Heart left ventricle (tissue), 16 donors: ENCODE measurements at regions of chr9 and their contacts with region 1.

Region 1: DNA sequence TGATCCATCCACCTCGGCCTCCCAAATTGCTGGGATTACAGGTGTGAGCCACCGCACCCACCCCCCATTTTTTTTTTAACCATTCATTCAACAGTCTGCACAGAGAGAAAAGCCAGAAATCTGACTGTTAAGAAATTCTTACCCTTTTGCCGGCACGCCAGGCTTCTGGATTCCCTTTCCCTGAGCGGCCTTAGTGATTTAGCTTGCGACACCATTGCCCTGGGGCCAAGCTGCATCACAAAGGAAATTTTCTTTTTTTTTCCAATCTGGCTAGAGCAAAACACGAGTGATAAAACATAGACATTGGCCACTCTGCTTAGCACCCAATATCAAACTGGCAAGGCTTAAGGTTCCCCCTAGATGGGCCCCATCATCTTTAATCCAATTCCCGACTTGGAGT is 21.2 kb upstream of the ATOSB start:
- DNase-seq: no peak
- ATAC-seq: no peak
- H3K4me3 ChIP-seq: no peak overlapping the region
- H3K27ac ChIP-seq: no peak overlapping the region
- H3K4me1 ChIP-seq: peaks cover 0 to 17% (median 6%) of the 10 kb centered on the region in 12 donors
- H3K27me3 ChIP-seq: no peaks in the 10 kb centered on the region
- CTCF ChIP-seq: no peak
- POLR2A ChIP-seq: no peak

Region 2: DNA sequence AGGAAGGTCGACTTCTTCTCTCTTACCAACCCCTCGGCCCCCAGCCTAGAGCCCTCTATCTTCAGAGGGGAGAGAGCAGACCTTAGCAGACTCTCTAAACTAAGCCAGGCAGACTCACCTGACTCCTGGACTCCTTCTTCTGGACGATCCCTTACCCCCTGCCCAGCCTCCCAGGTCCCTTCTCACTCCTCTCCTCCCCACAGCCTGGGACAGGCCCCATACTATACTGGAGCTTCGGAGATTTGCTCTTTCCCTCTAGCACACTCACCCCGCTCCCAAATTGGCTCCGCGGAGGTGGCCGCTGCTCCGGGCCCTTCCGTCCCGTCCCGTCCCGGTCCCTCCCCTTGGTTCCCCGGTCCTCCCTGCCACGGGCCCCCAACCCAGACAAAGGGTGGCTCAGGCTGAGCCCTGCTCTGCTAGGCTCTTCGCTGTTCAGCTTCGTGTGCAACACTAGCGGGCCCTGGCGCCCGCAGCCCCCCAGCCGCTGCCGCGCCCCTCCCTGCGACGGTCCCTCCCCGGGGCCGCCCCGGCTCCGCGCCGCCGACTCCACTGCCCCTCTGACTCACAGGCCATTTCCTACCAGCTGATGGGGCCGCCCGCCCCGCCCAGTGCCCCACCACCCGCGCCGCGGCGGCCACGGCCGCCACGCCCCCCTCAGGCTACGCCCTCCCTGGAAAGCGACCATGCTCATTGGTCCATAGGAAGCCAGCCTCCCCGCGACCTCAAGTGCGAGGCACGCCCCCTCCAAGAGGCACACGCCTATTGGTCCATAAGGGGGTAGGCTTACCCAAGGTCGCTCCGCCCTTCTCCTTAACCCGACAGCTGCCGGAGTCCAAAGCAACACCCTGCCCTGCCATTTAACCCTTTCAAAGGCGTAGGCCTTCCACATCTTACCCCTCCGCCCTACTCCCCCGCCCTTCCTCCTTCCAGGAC is 25.6 kb before region 1 on chr9:
- intact Hi-C with region 1: no loop called
- DNase-seq: peak; percentile 98 to 99 (median 99)
- ATAC-seq: peak; percentile 75 to 87 (median 80)
- H3K4me3 ChIP-seq: peak overlapping the region; percentile 62 to 96 (median 88)
- H3K27ac ChIP-seq: peak overlapping the region; percentile 62 to 98 (median 92)
- H3K4me1 ChIP-seq: peaks cover 3 to 56% (median 46%) of the 10 kb centered on the region in 12 donors
- H3K27me3 ChIP-seq: no peaks in the 10 kb centered on the region
- CTCF ChIP-seq: no peak
- POLR2A ChIP-seq: peak; percentile 39 to 87

Region 3: DNA sequence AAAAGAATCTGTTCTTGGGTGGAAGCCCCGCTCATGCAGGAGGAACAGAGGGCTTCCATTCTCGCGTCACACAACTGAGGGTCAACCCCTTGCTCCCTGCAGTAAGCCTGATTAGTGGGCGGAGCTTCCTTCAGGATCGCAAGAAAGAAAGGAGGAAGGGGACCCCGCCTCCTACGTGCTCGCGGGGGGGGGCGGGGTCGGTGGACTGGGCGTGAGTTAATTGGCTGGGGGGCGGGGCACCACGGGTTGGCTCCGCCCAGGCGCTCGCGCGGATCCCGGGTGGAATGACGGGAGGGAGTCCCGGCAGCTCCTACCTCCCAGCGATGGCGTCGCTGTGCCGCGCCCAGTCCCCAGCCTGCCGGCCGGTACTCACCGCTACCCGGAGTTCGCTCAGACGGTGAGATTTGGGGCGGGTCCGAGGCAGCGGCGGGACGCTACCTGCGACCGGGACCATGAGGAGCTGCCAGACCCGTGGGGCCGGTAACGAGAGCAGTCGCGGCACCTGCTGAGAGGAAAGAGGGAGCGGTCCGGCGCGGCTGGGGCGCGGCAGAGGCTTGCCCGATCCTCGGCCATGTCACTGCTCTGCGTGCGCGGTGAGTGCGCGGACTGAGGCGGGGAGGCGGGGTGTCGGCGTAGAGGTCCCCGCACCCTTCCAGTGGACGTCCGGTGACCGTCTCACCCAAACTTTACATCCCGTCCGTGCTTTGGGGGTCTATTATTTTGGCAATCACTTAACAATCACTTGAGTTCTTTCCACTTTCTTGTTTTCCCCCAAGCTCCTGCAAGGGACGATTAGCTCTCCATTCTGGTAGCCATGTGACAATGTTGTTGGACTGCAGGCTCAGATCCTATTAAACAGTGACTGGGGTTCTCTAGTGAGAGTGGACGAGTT is 25.1 kb after region 1 on chr9 and contains the start of gene UNC13B:
- intact Hi-C with region 1: no loop called
- DNase-seq: peak; percentile 95 to 97 (median 96)
- ATAC-seq: peak; percentile 98 to 99 (median 99)
- H3K4me3 ChIP-seq: peak within 1 kb of the TSS; percentile 65 to 93 (median 79)
- H3K27ac ChIP-seq: peak within 1 kb of the TSS; percentile 88 to 99 (median 94)
- H3K4me1 ChIP-seq: peaks cover 0 to 34% (median 21%) of the 10 kb centered on the region in 12 donors
- H3K27me3 ChIP-seq: no peaks in the 10 kb centered on the region
- CTCF ChIP-seq: peak in 5 of 12 donors; percentile 22 to 51 (median 33)
- POLR2A ChIP-seq: peak in 1 of 2 donors; percentile 78
- total RNA-seq, gene UNC13B: 18.0 to 30.2 (median 21.2) TPM

Region 4: DNA sequence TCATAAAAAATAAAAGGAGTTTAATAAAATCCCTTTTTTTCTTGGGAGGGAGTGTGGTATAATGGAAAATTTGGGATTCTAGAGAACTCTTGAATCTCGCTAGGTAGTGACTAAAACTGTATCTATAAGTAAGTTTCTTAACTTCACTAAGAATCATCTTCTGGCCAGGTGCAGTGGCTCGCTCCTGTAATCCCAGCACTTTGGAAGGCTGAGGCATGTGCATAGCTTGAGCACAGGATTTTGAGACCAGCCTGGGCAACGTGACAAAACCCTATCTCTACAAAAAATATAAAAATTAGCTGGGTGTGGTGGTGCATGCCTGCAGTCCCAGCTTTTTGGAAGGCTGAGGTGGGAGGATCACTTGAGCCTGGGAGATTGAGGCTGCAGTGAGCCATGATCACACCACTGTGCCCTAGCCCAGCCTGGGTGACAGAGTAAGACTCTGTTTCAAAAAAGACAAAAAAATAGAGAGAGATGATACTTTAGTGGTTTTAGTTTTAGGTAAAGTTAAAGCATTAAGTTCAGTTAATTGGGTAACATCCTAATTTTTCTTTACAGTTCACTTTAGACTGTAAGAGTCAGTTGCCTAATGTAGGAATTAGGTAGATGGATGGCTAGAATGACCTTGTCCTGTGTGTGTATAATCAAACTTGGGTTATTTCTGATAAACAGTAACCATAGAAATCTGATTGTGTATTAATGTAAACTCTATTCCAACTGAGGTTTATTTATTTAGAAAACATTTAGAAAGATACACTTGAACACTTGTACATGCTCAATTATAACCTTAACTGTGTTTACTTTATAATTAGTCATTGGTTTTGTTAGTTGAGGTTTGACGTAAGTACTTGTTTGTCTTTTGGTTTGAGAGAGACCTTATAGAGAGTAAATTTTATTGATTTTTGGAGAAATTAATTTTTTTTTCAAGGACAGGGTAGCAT is 42.8 kb after region 1 on chr9:
- intact Hi-C with region 1: loop called in 1 of 10 experiments (anchors 2 kb)
- DNase-seq: no peak
- ATAC-seq: no peak
- H3K4me3 ChIP-seq: no peak overlapping the region
- H3K27ac ChIP-seq: no peak overlapping the region
- H3K4me1 ChIP-seq: peaks cover 0 to 5% (median 0%) of the 10 kb centered on the region in 12 donors
- H3K27me3 ChIP-seq: no peaks in the 10 kb centered on the region
- CTCF ChIP-seq: no peak
- POLR2A ChIP-seq: no peak

Region 5: GRCh38 chr9:35306283-35306682 is 169.4 kb after region 1 on chr9:
- intact Hi-C with region 1: no loop called
- DNase-seq: no peak
- ATAC-seq: no peak
- H3K4me3 ChIP-seq: no peak overlapping the region
- H3K27ac ChIP-seq: no peak overlapping the region
- H3K4me1 ChIP-seq: peaks cover 0 to 5% (median under 1%) of the 10 kb centered on the region in 12 donors
- H3K27me3 ChIP-seq: no peaks in the 10 kb centered on the region
- CTCF ChIP-seq: no peak
- POLR2A ChIP-seq: no peak